Activated CD4-positive, alpha-beta memory T cell treated with anti-CD3 and anti-CD28 coated beads, Interleukin-2, amount 10 ng/mL, durations not matched to agents 7 days and 5 days (primary cell): ENCODE measurements at regions of chr13 and their contacts with region 1.

Region 1: DNA sequence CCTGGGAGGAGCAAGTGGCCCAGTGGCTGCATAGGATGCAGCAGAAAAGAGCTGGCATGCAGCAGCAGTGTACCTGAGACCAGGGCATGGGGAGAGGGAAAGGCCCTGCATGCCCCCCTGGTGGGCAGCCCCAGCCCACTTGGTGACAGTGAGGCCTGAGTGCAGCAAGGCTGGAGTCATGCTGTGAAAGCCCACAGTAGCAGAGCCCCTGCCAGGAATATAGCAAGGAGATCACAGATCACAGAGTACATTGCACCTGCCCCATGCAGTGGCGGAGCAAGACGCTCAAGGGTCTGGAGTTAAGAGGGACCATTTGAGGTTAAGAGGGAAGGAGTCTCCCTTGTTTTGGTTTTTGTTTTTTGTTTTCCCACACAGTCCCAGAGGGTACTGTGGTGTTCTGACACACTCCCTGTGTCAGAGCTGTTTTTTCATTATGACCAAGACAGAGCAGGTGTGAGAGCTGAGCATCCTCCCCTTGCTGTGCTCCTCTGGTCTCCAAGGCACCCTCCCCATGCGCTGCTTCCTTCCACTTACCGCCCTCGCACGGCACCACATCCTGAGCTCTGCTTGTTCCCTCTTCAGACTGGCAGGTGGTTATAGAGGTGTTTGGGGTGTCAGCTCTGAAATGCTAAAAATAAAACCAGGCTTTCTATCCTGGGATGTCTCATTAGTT is 85.0 kb upstream of the UBL3 start:
- DNase-seq: peak; percentile 91
- H3K4me3 Mint-ChIP-seq: peak overlapping the region; percentile 86
- H3K27ac Mint-ChIP-seq: peak overlapping the region; percentile 95
- H3K4me1 Mint-ChIP-seq: peaks cover 56% of the 10 kb centered on the region
- H3K27me3 Mint-ChIP-seq: no peaks in the 10 kb centered on the region

Region 2: GRCh38 chr13:29771247-29771646 is 164.2 kb before region 1 on chr13:
- CTCF ChIA-PET with region 1: interaction called, 14 read pairs
- POLR2A ChIA-PET with region 1: no interaction called
- DNase-seq: no peak
- H3K4me3 Mint-ChIP-seq: no peak overlapping the region
- H3K27ac Mint-ChIP-seq: no peak overlapping the region
- H3K4me1 Mint-ChIP-seq: no peaks in the 10 kb centered on the region
- H3K27me3 Mint-ChIP-seq: no peaks in the 10 kb centered on the region

Region 3: GRCh38 chr13:29830000-29830399 is 105.4 kb before region 1 on chr13:
- CTCF ChIA-PET with region 1: no interaction called
- POLR2A ChIA-PET with region 1: no interaction called
- DNase-seq: no peak
- H3K4me3 Mint-ChIP-seq: no peak overlapping the region
- H3K27ac Mint-ChIP-seq: no peak overlapping the region
- H3K4me1 Mint-ChIP-seq: peaks cover 9% of the 10 kb centered on the region
- H3K27me3 Mint-ChIP-seq: no peaks in the 10 kb centered on the region

Region 4: GRCh38 chr13:29850224-29850898 is 85.1 kb before region 1 on chr13 and contains the start of gene UBL3:
- CTCF ChIA-PET with region 1: interaction called, 48 read pairs
- POLR2A ChIA-PET with region 1: interaction called, 103 read pairs
- DNase-seq: peak; percentile 95
- H3K4me3 Mint-ChIP-seq: peak within 1 kb of the TSS; percentile 96
- H3K27ac Mint-ChIP-seq: peak within 1 kb of the TSS; percentile 95
- H3K4me1 Mint-ChIP-seq: peaks cover 37% of the 10 kb centered on the region
- H3K27me3 Mint-ChIP-seq: no peaks in the 10 kb centered on the region
- total RNA-seq, gene UBL3: 17.3 to 17.8 TPM

Region 5: DNA sequence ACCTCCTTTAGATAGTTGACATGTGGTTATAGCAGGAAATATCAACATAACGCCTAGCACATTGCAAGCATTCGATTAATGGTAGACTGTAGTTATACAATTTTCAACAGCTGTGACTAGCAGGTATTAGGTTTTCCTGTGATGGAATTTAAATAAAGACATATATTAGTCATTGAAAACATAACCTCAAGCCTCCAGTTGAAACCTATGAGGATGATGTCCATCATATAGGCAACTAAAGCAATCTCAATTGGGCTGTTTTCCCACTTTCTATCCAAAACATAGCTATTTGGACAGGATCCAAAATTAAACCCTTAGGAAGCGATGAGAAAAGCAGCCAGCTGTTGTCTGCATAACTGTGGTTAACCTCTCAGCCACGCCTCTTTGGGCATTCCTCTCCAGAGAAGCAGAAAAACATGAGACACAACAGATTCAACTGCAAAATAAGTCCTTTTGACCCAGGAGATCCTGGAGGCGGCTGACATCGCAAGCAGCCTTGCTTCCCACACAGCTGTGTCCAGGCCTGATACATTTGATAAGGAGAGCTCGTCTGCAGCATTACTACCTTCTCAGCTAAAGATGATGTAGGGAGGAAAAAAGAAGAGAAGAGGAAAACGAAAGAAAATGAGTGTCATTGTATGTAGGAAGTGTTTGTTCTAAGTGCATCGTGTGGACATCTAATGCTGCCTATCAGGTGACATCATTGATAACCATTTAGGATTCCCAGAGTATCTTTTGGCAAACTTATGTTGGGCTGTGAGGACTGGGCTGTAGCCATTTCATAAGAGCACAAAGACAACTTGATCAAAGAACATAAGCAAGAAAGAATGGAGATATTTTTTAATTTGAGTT is 33.1 kb before region 1 on chr13:
- CTCF ChIA-PET with region 1: interaction called, 9 read pairs
- POLR2A ChIA-PET with region 1: interaction called, 16 read pairs
- DNase-seq: peak; percentile 53
- H3K4me3 Mint-ChIP-seq: peak overlapping the region; percentile 63
- H3K27ac Mint-ChIP-seq: peak overlapping the region; percentile 61
- H3K4me1 Mint-ChIP-seq: peaks cover 24% of the 10 kb centered on the region
- H3K27me3 Mint-ChIP-seq: peaks cover 21% of the 10 kb centered on the region

Region 6: DNA sequence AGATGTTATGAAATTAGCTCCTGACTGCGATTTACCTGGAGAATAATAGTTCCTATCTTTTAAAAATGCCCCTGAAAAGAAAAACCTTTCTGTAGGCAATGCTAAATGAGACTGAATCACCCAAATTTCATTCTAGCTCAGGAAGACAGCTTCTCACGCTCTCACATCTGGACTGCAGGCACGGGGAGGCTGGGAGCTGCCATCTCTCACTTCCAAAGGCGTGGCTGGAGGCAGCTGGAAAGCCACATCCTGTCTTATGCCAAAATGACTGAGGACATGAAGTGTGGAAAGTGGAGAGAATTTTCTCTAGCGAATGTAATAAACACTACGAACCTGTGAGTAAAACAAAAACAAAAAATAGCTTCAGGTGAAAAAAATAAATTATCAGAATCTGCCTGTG is 27.0 kb before region 1 on chr13:
- CTCF ChIA-PET with region 1: interaction called, 9 read pairs
- POLR2A ChIA-PET with region 1: interaction called, 16 read pairs
- DNase-seq: no peak
- H3K4me3 Mint-ChIP-seq: no peak overlapping the region
- H3K27ac Mint-ChIP-seq: no peak overlapping the region
- H3K4me1 Mint-ChIP-seq: peaks cover 20% of the 10 kb centered on the region
- H3K27me3 Mint-ChIP-seq: no peaks in the 10 kb centered on the region

Region 7: GRCh38 chr13:29923554-29924481 is 11.6 kb before region 1 on chr13:
- CTCF ChIA-PET with region 1: interaction called, 80 read pairs
- POLR2A ChIA-PET with region 1: interaction called, 45 read pairs
- DNase-seq: peak; percentile 60
- H3K4me3 Mint-ChIP-seq: no peak overlapping the region
- H3K27ac Mint-ChIP-seq: no peak overlapping the region
- H3K4me1 Mint-ChIP-seq: peaks cover 38% of the 10 kb centered on the region
- H3K27me3 Mint-ChIP-seq: no peaks in the 10 kb centered on the region

Region 8: DNA sequence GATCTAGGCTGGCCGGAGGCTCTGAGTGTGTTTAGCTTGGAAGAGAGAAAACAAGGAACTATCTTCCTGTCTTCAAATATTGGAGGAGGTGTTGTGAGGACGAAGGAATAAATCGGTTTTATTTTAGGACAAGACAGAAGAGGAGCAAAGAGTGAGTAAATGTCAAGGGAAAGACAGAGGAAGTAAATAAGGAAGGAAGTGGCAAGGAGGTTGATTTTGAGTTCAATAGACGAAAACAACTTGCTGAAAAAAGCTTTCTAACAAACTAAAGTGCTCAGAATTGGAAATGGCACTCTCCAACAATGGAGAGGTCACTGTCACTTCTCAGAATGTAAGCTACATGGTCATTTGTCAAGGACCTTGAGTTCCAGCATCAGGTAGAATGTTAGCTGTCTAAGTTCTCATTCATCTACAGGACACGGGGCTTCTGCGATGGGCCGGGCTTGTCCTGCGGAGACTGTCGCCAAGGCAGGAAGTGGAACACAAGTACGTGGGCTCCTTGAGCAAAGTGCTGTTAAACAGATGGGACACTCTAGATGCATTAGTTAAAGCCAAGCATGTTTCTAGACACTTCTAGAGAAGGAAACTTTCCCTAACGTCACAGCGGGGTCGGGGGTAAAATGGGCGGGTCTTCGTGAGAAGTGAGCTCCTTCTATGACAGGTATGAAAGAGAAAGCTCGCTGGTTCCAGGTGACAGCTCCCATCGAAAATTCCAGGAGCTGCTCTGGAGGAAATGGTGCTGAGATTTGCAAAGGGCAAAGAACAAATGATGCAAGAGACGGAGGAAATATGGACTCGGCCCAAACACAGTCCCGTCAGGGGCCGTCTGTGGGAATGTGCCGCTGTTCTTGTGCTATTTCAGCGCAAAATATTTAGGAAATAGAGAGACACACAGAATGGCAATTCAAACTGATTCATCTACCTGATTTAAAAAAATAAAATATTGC is 18.9 kb after region 1 on chr13:
- CTCF ChIA-PET with region 1: interaction called, 43 read pairs
- POLR2A ChIA-PET with region 1: interaction called, 80 read pairs
- DNase-seq: peak; percentile 69
- H3K4me3 Mint-ChIP-seq: peak overlapping the region; percentile 61
- H3K27ac Mint-ChIP-seq: peak overlapping the region; percentile 91
- H3K4me1 Mint-ChIP-seq: peaks cover 41% of the 10 kb centered on the region
- H3K27me3 Mint-ChIP-seq: peaks cover 5% of the 10 kb centered on the region